A673 (cell line): ENCODE measurements at regions of chr9 and their contacts with region 1.

Region 1: DNA sequence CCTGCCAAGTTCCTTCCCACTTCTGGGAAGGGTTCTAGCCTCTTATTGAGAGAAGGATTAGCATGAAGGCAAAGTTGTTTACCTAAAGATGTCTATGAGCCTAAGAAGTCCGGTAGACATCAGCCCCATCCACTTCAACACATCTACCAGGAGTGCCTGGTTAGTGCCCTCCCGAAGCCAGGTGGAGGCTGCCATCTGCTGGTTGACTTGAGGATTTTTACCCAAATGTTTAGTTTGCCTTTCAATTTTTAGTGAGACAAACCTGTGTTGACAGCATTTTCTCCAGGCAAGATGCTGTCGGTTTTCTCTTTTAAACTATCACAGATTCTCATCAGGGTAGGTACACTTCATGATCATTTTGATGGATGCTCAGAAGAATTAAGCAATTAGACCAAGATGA is 83.6 kb upstream of the TNFSF8 start:
- DNase-seq: peak; percentile 87
- H3K4me3 ChIP-seq: no peak overlapping the region
- H3K27ac ChIP-seq: no peak overlapping the region
- H3K4me1 ChIP-seq: peaks cover 5% of the 10 kb centered on the region
- H3K27me3 ChIP-seq: no peaks in the 10 kb centered on the region
- CTCF ChIP-seq: peak; percentile 87

Region 2: DNA sequence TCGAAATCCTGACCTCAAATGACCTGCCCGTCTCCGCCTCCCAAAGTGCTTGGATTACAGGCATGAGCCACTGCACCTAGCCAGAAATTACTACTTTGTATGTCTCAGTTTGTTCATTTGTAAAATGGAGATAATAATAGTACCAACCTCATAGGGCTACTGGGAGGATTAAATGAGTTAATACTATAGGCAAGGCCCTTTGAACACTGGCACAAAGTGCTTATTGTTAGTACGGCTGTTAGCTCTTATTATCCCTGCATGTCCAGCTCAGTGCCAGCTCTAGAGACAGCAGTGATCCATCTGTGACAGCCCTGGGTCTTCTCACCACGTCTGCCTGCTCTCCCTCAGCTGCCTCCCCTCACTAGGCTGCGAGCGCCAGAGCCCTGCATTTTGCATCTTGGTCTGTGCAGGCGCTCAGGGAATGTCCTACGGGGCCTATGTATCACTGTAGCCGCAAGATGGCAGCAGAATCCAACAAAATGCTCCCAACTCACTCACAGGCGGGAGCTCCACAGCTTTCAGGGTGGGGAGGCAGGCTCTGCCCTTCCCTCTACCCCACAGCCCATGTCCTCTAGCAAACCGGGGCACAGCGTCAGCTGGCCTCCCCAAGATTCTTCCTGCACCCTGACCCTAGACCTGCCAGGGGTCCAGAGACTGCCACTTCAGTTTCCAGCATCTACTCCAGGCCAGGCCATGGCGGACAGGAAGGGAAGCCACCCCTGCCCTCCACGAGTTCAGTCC is 608.5 kb before region 1 on chr9:
- CTCF ChIA-PET with region 1: interaction called, 6 read pairs
- POLR2A ChIA-PET with region 1: no interaction called
- intact Hi-C with region 1: loop called (anchors 1 kb)
- DNase-seq: peak; percentile 88
- H3K4me3 ChIP-seq: no peak overlapping the region
- H3K27ac ChIP-seq: no peak overlapping the region
- H3K4me1 ChIP-seq: no peaks in the 10 kb centered on the region
- H3K27me3 ChIP-seq: no peaks in the 10 kb centered on the region
- CTCF ChIP-seq: peak; percentile 84

Region 3: DNA sequence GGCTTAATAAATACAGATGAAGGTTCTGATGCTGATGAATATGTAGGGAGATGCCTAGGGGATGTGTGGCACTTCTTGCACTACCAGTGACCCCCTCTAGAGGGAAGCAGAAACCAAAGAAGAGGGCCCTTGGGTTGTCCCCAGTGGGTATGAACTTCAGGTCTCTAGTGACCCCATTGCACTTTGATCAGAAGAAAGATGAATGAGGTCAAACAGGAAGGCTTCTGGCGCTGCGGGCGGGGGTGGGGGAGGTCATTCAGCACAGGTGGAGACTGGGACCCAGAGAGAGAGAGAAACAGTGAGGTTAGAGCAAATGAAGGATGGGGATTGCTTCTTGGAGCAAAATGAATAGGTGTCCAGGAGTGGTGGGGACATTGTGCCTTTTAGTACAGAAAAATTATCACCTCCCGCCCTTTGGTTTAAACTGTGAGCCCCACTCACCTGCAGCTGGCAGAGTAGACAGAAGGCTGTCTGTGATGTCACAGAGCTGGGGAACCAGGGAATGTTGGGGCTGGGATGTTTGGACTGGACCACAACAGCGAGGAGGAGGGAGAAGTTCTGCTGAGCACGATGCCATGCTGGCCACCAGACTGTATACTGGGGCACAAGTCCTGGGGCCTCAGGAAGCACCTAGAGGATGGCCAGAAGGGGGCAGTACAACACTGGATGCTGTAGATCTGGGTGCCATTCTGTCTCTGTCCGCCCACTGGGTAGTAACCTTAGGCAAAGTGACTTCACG is 332.2 kb before region 1 on chr9 and contains the start of gene TEX48:
- CTCF ChIA-PET with region 1: interaction called, 5 read pairs
- POLR2A ChIA-PET with region 1: no interaction called
- intact Hi-C with region 1: loop called (anchors 1 kb)
- DNase-seq: peak; percentile 84
- H3K4me3 ChIP-seq: no peak within 1 kb of the TSS
- H3K27ac ChIP-seq: no peak within 1 kb of the TSS
- H3K4me1 ChIP-seq: peaks cover 16% of the 10 kb centered on the region
- H3K27me3 ChIP-seq: no peaks in the 10 kb centered on the region
- CTCF ChIP-seq: peak; percentile 74
- total RNA-seq, gene TEX48: not detected in 2 replicates

Region 4: DNA sequence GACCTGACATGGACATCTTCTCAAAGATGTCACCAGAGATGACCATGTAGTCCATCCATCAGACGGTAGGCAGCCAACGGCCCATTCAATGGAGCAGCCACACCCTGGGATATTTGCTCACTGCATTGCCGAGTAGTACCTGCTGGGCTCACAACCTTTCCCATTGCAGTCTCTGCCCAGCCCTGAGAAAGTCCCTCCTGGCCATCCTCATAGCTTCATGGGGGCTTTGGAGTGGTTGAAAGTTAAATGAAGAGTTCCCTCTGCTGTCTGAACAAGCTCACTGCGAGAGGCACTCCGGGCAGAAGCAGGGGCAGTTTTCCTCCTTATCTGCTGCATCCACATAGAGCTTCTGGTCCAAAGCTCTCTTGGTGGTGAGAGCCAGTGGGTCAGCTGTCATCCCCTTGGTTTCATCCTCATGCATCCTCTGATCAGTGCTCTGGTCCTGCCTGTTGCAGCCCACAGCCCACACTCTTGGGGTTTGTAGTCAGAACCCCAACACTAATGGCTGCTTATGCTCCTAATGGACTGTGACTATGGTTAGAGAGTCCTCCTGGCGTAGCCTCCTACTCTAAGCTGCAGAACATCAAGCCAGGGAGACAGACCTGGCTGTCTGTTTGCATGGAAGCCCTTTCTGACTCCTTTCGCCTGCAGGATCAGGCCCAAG is 107.0 kb before region 1 on chr9:
- CTCF ChIA-PET with region 1: interaction called, 11 read pairs
- POLR2A ChIA-PET with region 1: no interaction called
- intact Hi-C with region 1: no loop called
- DNase-seq: peak; percentile 63
- H3K4me3 ChIP-seq: no peak overlapping the region
- H3K27ac ChIP-seq: no peak overlapping the region
- H3K4me1 ChIP-seq: peaks cover 11% of the 10 kb centered on the region
- H3K27me3 ChIP-seq: no peaks in the 10 kb centered on the region
- CTCF ChIP-seq: peak; percentile 79

Region 5: GRCh38 chr9:115117999-115118878 is 104.2 kb after region 1 on chr9 and contains the start of gene TNC:
- CTCF ChIA-PET with region 1: no interaction called
- POLR2A ChIA-PET with region 1: no interaction called
- intact Hi-C with region 1: no loop called
- DNase-seq: peak; percentile 96
- H3K4me3 ChIP-seq: peak within 1 kb of the TSS; percentile 52
- H3K27ac ChIP-seq: peak within 1 kb of the TSS; percentile 82
- H3K4me1 ChIP-seq: peaks cover 36% of the 10 kb centered on the region
- H3K27me3 ChIP-seq: no peaks in the 10 kb centered on the region
- CTCF ChIP-seq: no peak
- total RNA-seq, gene TNC: 202 and 206 TPM in 2 replicates

Region 6: DNA sequence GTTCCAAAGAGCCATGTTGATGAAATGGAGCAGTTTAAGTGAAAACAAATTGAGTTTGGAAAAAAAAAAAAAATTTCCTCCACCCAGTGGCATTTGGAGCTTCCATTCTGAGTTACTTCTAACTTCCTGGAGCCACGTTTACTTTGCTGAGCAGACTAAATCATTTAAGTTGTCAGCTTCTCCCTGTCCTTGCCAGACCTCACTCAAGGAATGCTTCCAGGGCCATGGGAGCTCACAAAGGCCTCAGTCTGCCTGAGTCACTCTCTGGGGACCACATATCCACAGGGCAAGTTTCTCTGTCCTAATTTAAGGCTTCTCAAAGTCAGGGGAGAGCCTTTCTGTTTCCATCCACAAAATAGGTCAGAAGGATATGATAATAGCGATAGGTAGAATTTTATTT is 314.2 kb after region 1 on chr9:
- CTCF ChIA-PET with region 1: no interaction called
- POLR2A ChIA-PET with region 1: no interaction called
- intact Hi-C with region 1: no loop called
- DNase-seq: peak; percentile 21
- H3K4me3 ChIP-seq: no peak overlapping the region
- H3K27ac ChIP-seq: no peak overlapping the region
- H3K4me1 ChIP-seq: peaks cover 4% of the 10 kb centered on the region
- H3K27me3 ChIP-seq: no peaks in the 10 kb centered on the region
- CTCF ChIP-seq: no peak

Region 7: GRCh38 chr9:115524453-115525059 is 510.6 kb after region 1 on chr9:
- CTCF ChIA-PET with region 1: no interaction called
- POLR2A ChIA-PET with region 1: no interaction called
- intact Hi-C with region 1: loop called (anchors 1 kb)
- DNase-seq: peak; percentile 95
- H3K4me3 ChIP-seq: no peak overlapping the region
- H3K27ac ChIP-seq: peak overlapping the region; percentile 68
- H3K4me1 ChIP-seq: peaks cover 21% of the 10 kb centered on the region
- H3K27me3 ChIP-seq: no peaks in the 10 kb centered on the region
- CTCF ChIP-seq: peak; percentile 89